ENCODE measurements at regions of chr6 and their contacts with region 1.

Region 1: GRCh38 chr6:10404107-10404798 is 10.6 kb downstream of the TFAP2A start:
- DNase-seq: peak; percentile 93
- H3K4me3 ChIP-seq: peak overlapping the region; percentile 54 to 62 (median 60)
- H3K27ac ChIP-seq: peak overlapping the region; percentile 29 to 68 (median 63)
- H3K4me1 ChIP-seq: peaks cover 7 to 25% (median 20%) of the 10 kb centered on the region in 4 donors
- H3K27me3 ChIP-seq: peaks cover 0 to 51% (median 21%) of the 10 kb centered on the region in 4 donors
- CTCF ChIP-seq: peak; percentile 56 to 69 (median 58)
- EP300 ChIP-seq: no peak
- POLR2A ChIP-seq: no peak

Region 2: DNA sequence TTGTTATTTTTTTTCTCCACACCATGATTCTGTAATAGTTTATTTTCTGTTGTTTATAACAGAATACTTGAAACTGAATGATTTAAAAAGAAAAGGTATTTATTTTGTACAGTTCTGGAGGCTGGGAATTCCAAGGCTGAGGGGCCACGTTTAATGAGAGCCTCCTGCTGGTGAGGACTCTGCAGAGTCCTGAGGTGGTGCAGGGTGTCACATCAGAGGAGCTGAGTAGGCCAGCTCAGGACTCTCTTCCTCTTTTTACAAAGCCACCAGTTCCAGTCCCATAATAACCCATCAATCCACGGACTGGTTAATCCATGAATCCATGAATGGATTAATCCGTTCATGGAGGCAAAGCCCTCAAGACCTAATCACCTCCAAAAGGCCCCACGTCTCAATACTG is 60.9 kb before region 1 on chr6:
- intact Hi-C with region 1: no loop called
- DNase-seq: no peak
- H3K4me3 ChIP-seq: no peak overlapping the region
- H3K27ac ChIP-seq: no peak overlapping the region
- H3K4me1 ChIP-seq: no peaks in the 10 kb centered on the region
- H3K27me3 ChIP-seq: no peaks in the 10 kb centered on the region
- CTCF ChIP-seq: no peak
- EP300 ChIP-seq: no peak
- POLR2A ChIP-seq: no peak

Region 3: GRCh38 chr6:10534419-10534762 is 130.1 kb after region 1 on chr6:
- intact Hi-C with region 1: no loop called
- DNase-seq: no peak
- H3K4me3 ChIP-seq: no peak overlapping the region
- H3K27ac ChIP-seq: no peak overlapping the region
- H3K4me1 ChIP-seq: peaks cover 0 to 23% (median 8%) of the 10 kb centered on the region in 4 donors
- H3K27me3 ChIP-seq: no peaks in the 10 kb centered on the region
- CTCF ChIP-seq: no peak
- EP300 ChIP-seq: no peak
- POLR2A ChIP-seq: no peak

Region 4: GRCh38 chr6:11537229-11538051 is 1133.2 kb after region 1 on chr6 and contains the start of gene TMEM170B:
- intact Hi-C with region 1: loop called (anchors 10 kb)
- DNase-seq: peak; percentile 96
- H3K4me3 ChIP-seq: peak within 1 kb of the TSS; percentile 92 to 100 (median 96)
- H3K27ac ChIP-seq: peak within 1 kb of the TSS; percentile 80 to 88 (median 86)
- H3K4me1 ChIP-seq: peaks cover 5 to 27% (median 20%) of the 10 kb centered on the region in 4 donors
- H3K27me3 ChIP-seq: no peaks in the 10 kb centered on the region
- CTCF ChIP-seq: no peak
- EP300 ChIP-seq: no peak
- POLR2A ChIP-seq: peak; percentile 25
- total RNA-seq, gene TMEM170B: 5.4 to 8.6 (median 6.2) TPM